ENCODE measurements at regions of chr9 and their contacts with region 1.

Region 1: DNA sequence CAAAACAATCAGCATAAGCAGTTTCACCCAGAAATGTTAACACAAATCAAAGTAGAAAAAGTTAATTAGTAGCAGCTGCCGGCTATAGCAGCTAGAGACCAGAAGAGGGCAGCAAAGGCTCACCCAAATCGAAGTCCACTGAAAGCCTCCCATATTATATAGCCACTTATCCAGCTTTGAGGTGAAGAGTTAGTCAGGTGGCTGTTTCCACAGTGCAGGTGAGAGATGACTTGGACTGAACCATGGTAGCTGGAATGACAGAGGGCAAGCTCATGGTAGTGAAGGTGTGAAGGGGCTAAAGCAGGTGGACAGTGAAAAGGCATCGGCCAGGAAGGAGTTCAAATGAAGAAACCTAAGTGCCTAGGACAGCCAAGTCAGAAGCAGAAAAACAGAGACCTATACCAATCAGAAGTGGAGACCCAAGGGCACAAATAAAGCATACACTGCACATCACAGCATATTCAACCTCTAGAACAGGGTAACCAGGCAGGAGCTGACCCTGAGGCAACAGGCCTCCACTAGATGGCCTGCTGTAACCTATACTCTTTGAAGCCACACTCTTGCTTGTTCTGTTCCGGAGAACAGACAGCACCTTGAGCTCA is 7.2 kb upstream of the RNF38 start:
- DNase-seq: peak; percentile 71
- ATAC-seq: peak; percentile 82
- H3K4me3 Mint-ChIP-seq: no peak overlapping the region
- H3K27ac Mint-ChIP-seq: peak overlapping the region; percentile 29
- H3K4me1 Mint-ChIP-seq: peaks cover 5% of the 10 kb centered on the region
- H3K27me3 Mint-ChIP-seq: no peaks in the 10 kb centered on the region

Region 2: DNA sequence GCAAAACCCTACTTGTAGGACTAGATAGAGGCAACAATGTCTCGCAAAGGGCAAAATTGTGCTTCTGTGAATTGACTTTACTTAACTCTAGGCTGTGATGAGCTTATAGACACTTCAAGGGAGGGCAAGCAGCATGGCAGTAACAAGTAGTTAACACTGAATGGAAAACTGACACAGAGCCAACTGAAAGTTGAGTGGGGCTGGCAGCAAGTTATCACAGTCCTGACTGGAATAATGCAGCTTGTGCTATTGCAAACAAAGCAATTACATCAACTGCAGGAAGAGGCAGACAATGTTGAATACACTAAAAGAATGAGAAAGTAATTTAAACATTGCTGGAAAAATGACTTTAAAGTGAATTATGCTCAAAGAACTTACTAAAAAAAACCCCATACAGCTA is 69.4 kb before region 1 on chr9:
- CTCF ChIA-PET with region 1: no interaction called
- DNase-seq: no peak
- ATAC-seq: no peak
- H3K4me3 Mint-ChIP-seq: no peak overlapping the region
- H3K27ac Mint-ChIP-seq: no peak overlapping the region
- H3K4me1 Mint-ChIP-seq: peaks cover 12% of the 10 kb centered on the region
- H3K27me3 Mint-ChIP-seq: no peaks in the 10 kb centered on the region

Region 3: GRCh38 chr9:36396985-36397384 is 10.2 kb before region 1 on chr9:
- CTCF ChIA-PET with region 1: interaction called, 17 read pairs
- DNase-seq: no peak
- ATAC-seq: no peak
- H3K4me3 Mint-ChIP-seq: no peak overlapping the region
- H3K27ac Mint-ChIP-seq: no peak overlapping the region
- H3K4me1 Mint-ChIP-seq: peaks cover 53% of the 10 kb centered on the region
- H3K27me3 Mint-ChIP-seq: no peaks in the 10 kb centered on the region

Region 4: DNA sequence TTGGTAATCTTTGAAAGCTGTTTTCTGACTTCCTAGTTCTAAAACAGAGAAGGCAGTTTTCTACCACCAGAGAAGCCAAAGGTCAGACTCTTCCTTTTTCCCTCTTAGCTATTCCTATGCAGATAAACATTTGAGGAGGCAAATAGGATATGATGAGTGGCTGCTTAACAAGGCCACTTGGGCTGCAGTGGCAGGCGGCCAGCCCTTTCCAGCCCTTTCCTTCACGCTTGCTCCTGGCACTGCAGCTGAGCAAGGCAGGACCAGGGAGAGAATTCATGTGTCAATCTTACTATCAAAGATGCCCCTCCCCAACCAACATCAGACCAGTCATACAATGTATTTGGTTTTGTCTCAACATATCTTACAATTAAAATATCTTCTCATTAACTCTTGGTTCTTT is 29.7 kb after region 1 on chr9:
- CTCF ChIA-PET with region 1: interaction called, 16 read pairs
- DNase-seq: no peak
- ATAC-seq: no peak
- H3K4me3 Mint-ChIP-seq: no peak overlapping the region
- H3K27ac Mint-ChIP-seq: no peak overlapping the region
- H3K4me1 Mint-ChIP-seq: peaks cover 5% of the 10 kb centered on the region
- H3K27me3 Mint-ChIP-seq: no peaks in the 10 kb centered on the region

Region 5: DNA sequence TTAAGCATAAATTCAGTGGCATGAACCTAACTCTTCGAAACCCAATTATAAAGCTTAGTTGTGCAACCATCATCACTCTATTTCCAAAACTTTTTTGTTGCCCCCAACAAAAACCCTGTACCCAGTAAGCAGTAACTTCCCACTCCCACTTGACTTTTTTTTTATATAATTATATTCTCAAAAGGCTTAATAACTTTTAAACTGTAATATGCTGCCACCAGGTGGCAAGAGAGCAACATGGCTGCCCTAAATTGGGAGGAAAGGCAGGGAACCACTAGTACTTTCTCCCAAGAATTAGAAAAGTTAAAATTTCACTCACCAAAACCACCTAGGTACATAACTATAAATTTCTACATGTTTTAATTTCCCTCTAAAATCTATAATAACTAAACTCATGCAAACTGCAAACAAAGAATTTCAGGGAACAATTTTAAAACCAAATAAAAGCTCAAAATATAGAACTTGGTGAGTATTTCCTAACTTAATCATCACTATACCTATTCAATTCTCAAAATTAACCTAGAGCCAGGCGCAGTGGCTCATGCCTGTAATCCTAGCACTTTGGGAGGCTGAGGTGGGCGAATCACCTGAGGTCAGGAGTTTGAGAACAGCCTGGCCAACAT is 43.0 kb after region 1 on chr9:
- CTCF ChIA-PET with region 1: interaction called, 35 read pairs
- DNase-seq: peak; percentile 44
- ATAC-seq: no peak
- H3K4me3 Mint-ChIP-seq: no peak overlapping the region
- H3K27ac Mint-ChIP-seq: no peak overlapping the region
- H3K4me1 Mint-ChIP-seq: peaks cover 18% of the 10 kb centered on the region
- H3K27me3 Mint-ChIP-seq: no peaks in the 10 kb centered on the region

Region 6: GRCh38 chr9:36487482-36488388 is 80.5 kb after region 1 on chr9:
- CTCF ChIA-PET with region 1: interaction called, 26 read pairs
- DNase-seq: peak; percentile 93
- ATAC-seq: peak; percentile 95
- H3K4me3 Mint-ChIP-seq: peak overlapping the region; percentile 89
- H3K27ac Mint-ChIP-seq: peak overlapping the region; percentile 100
- H3K4me1 Mint-ChIP-seq: peaks cover 54% of the 10 kb centered on the region
- H3K27me3 Mint-ChIP-seq: no peaks in the 10 kb centered on the region

Region 7: GRCh38 chr9:36560857-36561221 is 153.6 kb after region 1 on chr9:
- CTCF ChIA-PET with region 1: interaction called, 169 read pairs
- DNase-seq: no peak
- ATAC-seq: no peak
- H3K4me3 Mint-ChIP-seq: no peak overlapping the region
- H3K27ac Mint-ChIP-seq: no peak overlapping the region
- H3K4me1 Mint-ChIP-seq: peaks cover under 1% of the 10 kb centered on the region
- H3K27me3 Mint-ChIP-seq: peaks cover 4% of the 10 kb centered on the region

Region 8: GRCh38 chr9:36728651-36729520 is 321.7 kb after region 1 on chr9:
- CTCF ChIA-PET with region 1: interaction called, 27 read pairs
- DNase-seq: peak; percentile 71
- ATAC-seq: peak; percentile 73
- H3K4me3 Mint-ChIP-seq: no peak overlapping the region
- H3K27ac Mint-ChIP-seq: no peak overlapping the region
- H3K4me1 Mint-ChIP-seq: peaks cover 7% of the 10 kb centered on the region
- H3K27me3 Mint-ChIP-seq: no peaks in the 10 kb centered on the region